Ascending aorta (tissue), 2 donors: ENCODE measurements at regions of chr5 and their contacts with region 1.

Region 1: DNA sequence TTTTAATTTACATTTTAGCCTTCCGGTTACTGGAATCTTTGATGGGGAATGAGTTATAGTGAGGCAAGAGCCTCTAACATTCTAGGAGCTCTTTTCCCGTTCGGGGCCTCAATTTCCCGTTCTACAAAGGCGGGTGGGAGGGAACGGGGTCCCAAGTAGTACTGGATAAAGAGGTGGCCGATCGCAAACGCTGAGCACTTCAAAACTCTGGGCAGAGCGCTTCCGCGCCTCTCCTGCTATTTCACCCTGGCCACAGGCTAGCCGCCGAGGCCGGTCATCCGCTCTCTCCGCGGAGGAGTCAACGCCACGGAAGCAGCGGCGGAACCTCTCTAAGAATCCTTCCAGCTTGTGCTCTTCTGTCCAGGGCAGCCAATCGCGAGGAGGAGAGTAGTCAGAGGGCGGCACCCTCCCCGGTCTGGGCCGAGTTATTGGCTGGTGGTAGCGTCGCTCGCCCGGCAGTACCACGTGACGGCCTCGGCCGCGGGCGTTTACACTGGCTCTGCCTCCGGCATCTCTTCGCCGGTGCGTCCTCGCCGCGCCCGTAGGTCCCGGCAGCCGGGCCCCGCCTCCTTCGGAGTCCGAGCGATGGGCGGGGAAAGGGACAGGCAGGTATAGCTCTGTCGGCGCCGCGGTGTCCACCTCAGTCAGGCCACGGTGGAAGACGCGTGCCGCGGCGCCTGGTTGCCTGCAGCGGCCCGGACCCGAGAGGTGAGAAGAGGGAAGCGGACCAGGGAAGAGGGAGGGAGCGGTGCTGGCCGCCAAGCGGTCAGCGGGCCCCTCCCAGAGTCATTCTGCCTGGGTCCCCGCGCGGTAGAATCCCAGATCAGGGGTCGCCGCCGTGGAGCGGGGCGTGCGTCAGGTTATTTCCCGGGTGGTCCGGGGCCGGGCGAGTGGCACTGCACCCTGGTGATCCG is at the start of gene SLC26A2:
- DNase-seq: peak; percentile 95 to 99
- H3K4me3 ChIP-seq: peak within 1 kb of the TSS; percentile 77 to 86
- H3K27ac ChIP-seq: peak within 1 kb of the TSS; percentile 88 to 94
- H3K4me1 ChIP-seq: peaks cover 0 to 12% of the 10 kb centered on the region in 2 donors
- H3K27me3 ChIP-seq: no peaks in the 10 kb centered on the region
- CTCF ChIP-seq: no peak
- total RNA-seq, gene SLC26A2: 6.9 TPM

Region 2: GRCh38 chr5:149852641-149853330 is 107.7 kb before region 1 on chr5:
- intact Hi-C with region 1: loop called (anchors 5 kb)
- DNase-seq: peak in 1 of 2 donors; percentile 87
- H3K4me3 ChIP-seq: no peak overlapping the region
- H3K27ac ChIP-seq: no peak overlapping the region
- H3K4me1 ChIP-seq: peaks cover 0 to 4% of the 10 kb centered on the region in 2 donors
- H3K27me3 ChIP-seq: no peaks in the 10 kb centered on the region
- CTCF ChIP-seq: peak; percentile 64 to 86 (median 77)

Region 3: GRCh38 chr5:149913436-149914419 is 46.8 kb before region 1 on chr5:
- intact Hi-C with region 1: loop called (anchors 10 kb)
- DNase-seq: peak in 1 of 2 donors; percentile 12
- H3K4me3 ChIP-seq: no peak overlapping the region
- H3K27ac ChIP-seq: no peak overlapping the region
- H3K4me1 ChIP-seq: peaks cover 3 to 15% of the 10 kb centered on the region in 2 donors
- H3K27me3 ChIP-seq: no peaks in the 10 kb centered on the region
- CTCF ChIP-seq: no peak

Region 4: GRCh38 chr5:149990518-149991376 is 30.2 kb after region 1 on chr5:
- intact Hi-C with region 1: loop called (anchors 2 kb)
- DNase-seq: peak in 1 of 2 donors; percentile 88
- H3K4me3 ChIP-seq: no peak overlapping the region
- H3K27ac ChIP-seq: no peak overlapping the region
- H3K4me1 ChIP-seq: peaks cover 2 to 10% of the 10 kb centered on the region in 2 donors
- H3K27me3 ChIP-seq: no peaks in the 10 kb centered on the region
- CTCF ChIP-seq: peak; percentile 88 to 96 (median 93)